A673 (cell line): ENCODE measurements at regions of chr5 and their contacts with region 1.

Region 1: GRCh38 chr5:108748401-108749127 is 867 bp downstream of the FER start:
- DNase-seq: peak; percentile 99
- H3K4me3 ChIP-seq: peak overlapping the region; percentile 93
- H3K27ac ChIP-seq: peak overlapping the region; percentile 97
- H3K4me1 ChIP-seq: peaks cover 12% of the 10 kb centered on the region
- H3K27me3 ChIP-seq: no peaks in the 10 kb centered on the region
- CTCF ChIP-seq: peak; percentile 47; the same call in 1 of the 2 replicates

Region 2: GRCh38 chr5:108727651-108728565 is 20.7 kb before region 1 on chr5:
- CTCF ChIA-PET with region 1: no interaction called
- POLR2A ChIA-PET with region 1: no interaction called
- intact Hi-C with region 1: loop called (anchors 2 kb)
- DNase-seq: peak; percentile 92
- H3K4me3 ChIP-seq: peak overlapping the region; percentile 70
- H3K27ac ChIP-seq: peak overlapping the region; percentile 88
- H3K4me1 ChIP-seq: peaks cover 18% of the 10 kb centered on the region
- H3K27me3 ChIP-seq: no peaks in the 10 kb centered on the region
- CTCF ChIP-seq: no peak

Region 3: GRCh38 chr5:108858959-108859358 is 110.4 kb after region 1 on chr5:
- CTCF ChIA-PET with region 1: no interaction called
- POLR2A ChIA-PET with region 1: no interaction called
- intact Hi-C with region 1: no loop called
- DNase-seq: peak; percentile 14
- H3K4me3 ChIP-seq: no peak overlapping the region
- H3K27ac ChIP-seq: no peak overlapping the region
- H3K4me1 ChIP-seq: peaks cover 7% of the 10 kb centered on the region
- H3K27me3 ChIP-seq: no peaks in the 10 kb centered on the region
- CTCF ChIP-seq: no peak

Region 4: GRCh38 chr5:109409844-109410388 is 661.4 kb after region 1 on chr5 and contains the start of gene PJA2:
- CTCF ChIA-PET with region 1: no interaction called
- POLR2A ChIA-PET with region 1: no interaction called
- intact Hi-C with region 1: loop called (anchors 2 kb)
- DNase-seq: peak; percentile 100
- H3K4me3 ChIP-seq: peak within 1 kb of the TSS; percentile 61
- H3K27ac ChIP-seq: peak within 1 kb of the TSS; percentile 96
- H3K4me1 ChIP-seq: peaks cover 16% of the 10 kb centered on the region
- H3K27me3 ChIP-seq: no peaks in the 10 kb centered on the region
- CTCF ChIP-seq: no peak
- total RNA-seq, gene PJA2: 47.3 and 55.2 TPM in 2 replicates